ENCODE measurements at regions of chr22 and their contacts with region 1.

Region 1: DNA sequence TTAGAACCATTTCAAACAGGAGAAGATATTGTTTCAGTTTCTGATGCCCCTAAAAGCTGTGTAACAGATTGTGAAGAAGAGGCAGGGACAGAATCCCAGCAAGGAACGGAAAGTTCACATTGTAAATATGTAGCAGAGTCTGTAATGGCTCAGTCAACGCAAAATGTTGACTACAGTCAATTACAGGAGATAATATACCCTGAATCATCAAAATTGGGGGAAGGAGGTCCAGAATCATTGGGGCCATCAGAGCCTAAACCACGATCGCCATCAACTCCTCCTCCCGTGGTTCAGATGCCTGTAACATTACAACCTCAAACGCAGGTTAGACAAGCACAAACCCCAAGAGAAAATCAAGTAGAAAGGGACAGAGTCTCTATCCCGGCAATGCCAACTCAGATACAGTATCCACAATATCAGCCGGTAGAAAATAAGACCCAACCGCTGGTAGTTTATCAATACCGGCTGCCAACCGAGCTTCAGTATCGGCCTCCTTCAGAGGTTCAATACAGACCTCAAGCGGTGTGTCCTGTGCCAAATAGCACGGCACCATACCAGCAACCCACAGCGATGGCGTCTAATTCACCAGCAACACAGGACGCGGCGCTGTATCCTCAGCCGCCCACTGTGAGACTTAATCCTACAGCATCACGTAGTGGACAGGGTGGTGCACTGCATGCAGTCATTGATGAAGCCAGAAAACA is 40.8 kb downstream of the IGLL1 start:
- DNase-seq: peak; percentile 87
- ATAC-seq: peak; percentile 100
- H3K4me3 Mint-ChIP-seq: no peak overlapping the region
- H3K27ac Mint-ChIP-seq: no peak overlapping the region
- H3K4me1 Mint-ChIP-seq: peaks cover 7% of the 10 kb centered on the region
- H3K27me3 Mint-ChIP-seq: no peaks in the 10 kb centered on the region

Region 2: GRCh38 chr22:23402275-23403151 is 136.8 kb before region 1 on chr22:
- CTCF ChIA-PET with region 1: no interaction called
- POLR2A ChIA-PET with region 1: no interaction called
- intact Hi-C with region 1: loop called (anchors 1 to 5 kb)
- DNase-seq: peak; percentile 82
- ATAC-seq: peak; percentile 95
- H3K4me3 Mint-ChIP-seq: no peak overlapping the region
- H3K27ac Mint-ChIP-seq: no peak overlapping the region
- H3K4me1 Mint-ChIP-seq: no peaks in the 10 kb centered on the region
- H3K27me3 Mint-ChIP-seq: no peaks in the 10 kb centered on the region

Region 3: GRCh38 chr22:23457355-23458068 is 81.8 kb before region 1 on chr22:
- CTCF ChIA-PET with region 1: no interaction called
- POLR2A ChIA-PET with region 1: no interaction called
- intact Hi-C with region 1: no loop called
- DNase-seq: no peak
- ATAC-seq: no peak
- H3K4me3 Mint-ChIP-seq: no peak overlapping the region
- H3K27ac Mint-ChIP-seq: no peak overlapping the region
- H3K4me1 Mint-ChIP-seq: peaks cover 11% of the 10 kb centered on the region
- H3K27me3 Mint-ChIP-seq: peaks cover 20% of the 10 kb centered on the region

Region 4: DNA sequence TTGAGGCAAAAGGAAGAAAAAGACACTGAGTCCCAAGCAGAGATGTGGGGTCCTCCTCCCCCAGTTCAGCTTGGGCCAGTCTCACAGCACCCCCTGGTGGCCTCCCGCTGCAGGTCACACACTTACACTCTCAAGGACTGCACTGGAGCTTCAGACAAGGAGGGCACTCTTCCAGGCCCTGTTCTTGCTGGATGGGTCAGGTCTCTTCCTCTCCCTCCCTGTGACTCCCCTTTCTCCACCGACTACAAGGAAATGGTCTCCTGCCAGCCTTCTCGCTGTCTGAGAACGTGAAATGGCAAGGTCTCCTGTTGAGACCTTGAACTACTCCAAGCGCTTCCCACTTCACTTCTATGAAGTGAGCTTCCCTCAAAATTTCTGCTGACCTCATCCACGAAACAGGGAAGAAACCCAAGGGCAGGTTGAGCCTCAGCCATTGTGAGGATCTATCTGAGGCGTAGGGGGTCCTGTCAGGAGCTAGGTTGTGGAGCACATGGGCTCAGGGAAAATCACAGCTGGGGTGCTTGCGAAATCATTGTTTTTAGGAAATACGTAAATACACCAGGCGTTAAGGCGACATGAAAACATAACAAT is 52.0 kb after region 1 on chr22:
- CTCF ChIA-PET with region 1: interaction called, 3 read pairs
- POLR2A ChIA-PET with region 1: no interaction called
- intact Hi-C with region 1: loop called (anchors 1 kb)
- DNase-seq: peak; percentile 77
- ATAC-seq: peak; percentile 79
- H3K4me3 Mint-ChIP-seq: no peak overlapping the region
- H3K27ac Mint-ChIP-seq: no peak overlapping the region
- H3K4me1 Mint-ChIP-seq: no peaks in the 10 kb centered on the region
- H3K27me3 Mint-ChIP-seq: no peaks in the 10 kb centered on the region

Region 5: GRCh38 chr22:23639661-23640060 is 100.4 kb after region 1 on chr22:
- CTCF ChIA-PET with region 1: no interaction called
- POLR2A ChIA-PET with region 1: no interaction called
- intact Hi-C with region 1: no loop called
- DNase-seq: no peak
- ATAC-seq: no peak
- H3K4me3 Mint-ChIP-seq: no peak overlapping the region
- H3K27ac Mint-ChIP-seq: no peak overlapping the region
- H3K4me1 Mint-ChIP-seq: no peaks in the 10 kb centered on the region
- H3K27me3 Mint-ChIP-seq: no peaks in the 10 kb centered on the region

Region 6: DNA sequence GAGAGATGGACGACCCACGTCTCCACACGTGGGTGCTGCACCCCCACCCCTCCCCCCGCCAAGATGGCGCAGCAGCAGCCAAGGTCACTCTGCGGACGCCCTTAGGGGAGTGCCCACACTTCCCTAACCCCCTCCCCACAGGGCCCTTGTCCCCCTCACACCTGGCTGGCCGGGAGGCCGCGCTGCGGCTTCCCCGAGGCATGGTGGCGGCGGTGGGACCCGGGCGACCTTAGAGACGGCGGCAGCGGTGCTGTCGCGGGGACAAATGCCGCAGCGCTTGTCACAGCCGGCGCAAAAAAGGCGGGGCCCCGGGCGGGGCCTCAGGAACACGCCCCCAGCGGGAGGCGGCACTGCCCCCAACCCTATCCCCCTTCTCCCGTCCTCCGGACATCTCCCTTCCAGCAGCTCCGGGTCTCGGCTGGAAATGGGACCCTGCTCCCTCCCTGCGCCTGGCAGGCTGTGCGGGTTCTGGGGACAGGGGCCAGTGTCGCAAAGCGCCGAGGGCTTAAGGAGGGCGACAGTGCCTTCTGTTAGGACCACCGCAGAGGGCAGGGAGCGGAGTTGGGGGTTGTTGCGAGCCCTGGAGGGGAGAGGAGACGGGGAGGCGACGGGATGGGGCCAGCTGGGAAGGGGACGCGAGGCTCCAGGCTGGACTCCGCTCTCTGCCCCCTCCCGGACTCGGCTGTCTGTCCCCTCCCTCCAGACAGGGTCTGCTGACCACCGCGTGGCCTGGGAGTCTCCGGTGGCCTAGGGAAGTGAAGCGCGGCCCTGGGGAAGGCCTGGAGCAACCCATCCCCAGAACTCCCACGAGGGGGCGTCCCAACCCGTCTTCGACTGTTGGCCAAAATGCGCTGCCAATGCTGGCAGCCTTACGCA is 228.6 kb after region 1 on chr22 and contains the start of gene CHCHD10:
- CTCF ChIA-PET with region 1: no interaction called
- POLR2A ChIA-PET with region 1: no interaction called
- intact Hi-C with region 1: loop called (anchors 2 to 5 kb)
- DNase-seq: peak; percentile 87
- ATAC-seq: peak; percentile 66
- H3K4me3 Mint-ChIP-seq: peak within 1 kb of the TSS; percentile 75
- H3K27ac Mint-ChIP-seq: peak within 1 kb of the TSS; percentile 72
- H3K4me1 Mint-ChIP-seq: peaks cover 36% of the 10 kb centered on the region
- H3K27me3 Mint-ChIP-seq: no peaks in the 10 kb centered on the region
- total RNA-seq, gene CHCHD10: 131 to 134 TPM

Measured in activated CD4-positive, alpha-beta T cell treated with anti-CD3 and anti-CD28 coated beads for 36 hours (primary cell).